Activated T-helper 2 cell treated with anti-CD3 and anti-CD28 coated beads, Interferon-gamma antibody, Interleukin-2, Interleukin-4, amounts not matched to agents 10 μg/mL and 5 μg/mL and 100 μg/mL, durations not matched to agents 14 hours and 24 hours and 36 hours (primary cell): ENCODE measurements at regions of chr17 and their contacts with region 1.

Region 1: DNA sequence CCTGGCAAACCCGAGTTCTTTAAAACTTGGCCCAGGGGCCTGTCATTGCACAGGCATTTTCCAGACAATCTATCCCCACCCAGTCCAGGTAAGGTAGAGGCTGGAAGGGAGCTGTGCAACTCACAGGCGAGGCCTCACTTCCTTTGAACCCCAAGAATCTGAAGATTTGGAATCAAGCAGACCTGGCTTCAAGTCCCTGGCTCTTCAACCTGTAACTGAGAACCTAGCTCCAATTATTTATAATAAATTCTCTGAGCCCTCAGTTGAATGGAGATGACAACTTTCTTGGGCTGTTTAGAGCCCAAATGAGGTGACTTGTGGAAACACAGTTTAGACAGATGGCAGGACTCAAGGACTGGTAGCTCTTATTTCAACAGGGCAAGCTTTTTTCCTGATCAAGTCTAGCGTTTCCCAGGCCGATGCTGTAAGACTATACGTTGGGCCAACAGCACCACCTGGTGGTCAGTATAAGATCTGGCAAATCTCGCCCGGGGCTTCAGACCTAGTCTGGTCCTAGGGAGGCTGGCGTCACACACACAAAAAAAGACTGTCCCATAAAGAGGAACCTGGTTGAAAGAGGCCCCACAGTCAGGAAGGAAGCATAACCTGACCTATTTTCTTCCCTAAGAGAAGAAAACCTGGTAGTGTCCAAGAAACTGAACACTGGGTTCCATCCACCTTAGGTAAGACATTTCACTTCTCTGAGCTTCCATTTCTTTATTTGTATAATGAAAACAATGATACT is 117.9 kb downstream of the C17orf67 start:
- DNase-seq: peak; percentile 54
- H3K4me3 Mint-ChIP-seq: no peak overlapping the region
- H3K27ac Mint-ChIP-seq: no peak overlapping the region
- H3K4me1 Mint-ChIP-seq: peaks cover 4% of the 10 kb centered on the region
- H3K27me3 Mint-ChIP-seq: peaks cover 14% of the 10 kb centered on the region

Region 2: DNA sequence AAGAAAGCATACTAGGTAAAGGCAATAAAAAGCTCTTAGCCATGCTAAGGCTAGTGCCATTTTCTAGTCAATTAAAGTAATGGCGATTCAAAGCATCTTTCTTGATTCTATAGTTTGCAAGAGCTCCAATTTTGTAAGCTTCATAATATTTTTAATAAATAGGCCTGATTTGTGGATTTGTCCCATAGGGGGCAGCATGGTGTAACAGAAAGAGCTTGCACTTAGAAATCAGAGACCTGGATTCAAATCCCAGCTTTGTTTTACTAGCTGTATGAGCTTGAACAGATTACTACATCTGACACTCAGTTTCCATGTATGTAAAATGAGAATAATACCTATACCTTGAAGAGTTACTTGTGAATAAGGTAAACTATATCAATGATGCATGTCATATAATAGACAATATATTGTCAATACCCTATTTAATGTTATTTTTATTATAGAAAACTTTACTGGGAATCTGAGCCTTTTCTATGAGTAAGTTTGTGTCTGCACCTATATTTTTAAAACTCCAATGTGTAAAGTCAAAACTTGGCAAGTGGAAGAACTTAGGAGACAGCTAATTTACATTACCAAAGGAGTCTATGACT is 215.9 kb before region 1 on chr17:
- intact Hi-C with region 1: loop called (anchors 10 kb)
- DNase-seq: no peak
- H3K4me3 Mint-ChIP-seq: no peak overlapping the region
- H3K27ac Mint-ChIP-seq: no peak overlapping the region
- H3K4me1 Mint-ChIP-seq: no peaks in the 10 kb centered on the region
- H3K27me3 Mint-ChIP-seq: peaks cover 8% of the 10 kb centered on the region

Region 3: GRCh38 chr17:56661916-56662315 is 53.9 kb before region 1 on chr17:
- intact Hi-C with region 1: no loop called
- DNase-seq: no peak
- H3K4me3 Mint-ChIP-seq: no peak overlapping the region
- H3K27ac Mint-ChIP-seq: no peak overlapping the region
- H3K4me1 Mint-ChIP-seq: no peaks in the 10 kb centered on the region
- H3K27me3 Mint-ChIP-seq: peaks cover 19% of the 10 kb centered on the region

Region 4: DNA sequence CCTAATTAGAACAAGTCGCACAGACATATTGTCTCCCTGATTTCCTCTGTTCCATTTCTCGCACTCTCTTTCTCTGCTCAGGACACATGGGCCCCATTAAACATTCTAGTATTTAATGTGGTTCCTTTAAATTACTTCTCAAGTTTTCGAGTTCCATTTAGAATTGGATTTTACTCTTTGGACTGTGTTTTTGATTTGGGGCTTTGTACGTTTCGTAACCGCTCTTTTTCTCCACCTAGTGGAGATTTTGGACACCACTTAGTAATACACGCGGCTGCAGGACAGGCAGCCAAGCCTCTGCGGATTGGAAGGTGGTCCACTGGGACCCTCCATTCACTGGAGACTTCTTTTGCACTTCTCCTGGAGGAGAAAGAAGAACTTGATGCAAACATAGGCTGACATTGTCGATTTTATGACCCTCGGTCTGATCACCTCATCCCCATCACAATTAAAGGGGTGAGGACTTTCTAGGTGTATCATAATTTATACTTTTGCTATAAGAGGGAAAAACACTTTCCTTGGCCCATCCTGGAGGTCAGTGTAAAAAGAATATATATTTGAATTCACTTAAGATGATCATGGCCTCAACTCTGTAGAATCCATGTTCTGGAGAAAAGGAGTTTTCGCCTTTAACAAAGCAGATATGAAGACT is 36.5 kb before region 1 on chr17:
- intact Hi-C with region 1: loop called (anchors 5 kb)
- DNase-seq: no peak
- H3K4me3 Mint-ChIP-seq: no peak overlapping the region
- H3K27ac Mint-ChIP-seq: no peak overlapping the region
- H3K4me1 Mint-ChIP-seq: peaks cover 17% of the 10 kb centered on the region
- H3K27me3 Mint-ChIP-seq: peaks cover 45% of the 10 kb centered on the region

Region 5: DNA sequence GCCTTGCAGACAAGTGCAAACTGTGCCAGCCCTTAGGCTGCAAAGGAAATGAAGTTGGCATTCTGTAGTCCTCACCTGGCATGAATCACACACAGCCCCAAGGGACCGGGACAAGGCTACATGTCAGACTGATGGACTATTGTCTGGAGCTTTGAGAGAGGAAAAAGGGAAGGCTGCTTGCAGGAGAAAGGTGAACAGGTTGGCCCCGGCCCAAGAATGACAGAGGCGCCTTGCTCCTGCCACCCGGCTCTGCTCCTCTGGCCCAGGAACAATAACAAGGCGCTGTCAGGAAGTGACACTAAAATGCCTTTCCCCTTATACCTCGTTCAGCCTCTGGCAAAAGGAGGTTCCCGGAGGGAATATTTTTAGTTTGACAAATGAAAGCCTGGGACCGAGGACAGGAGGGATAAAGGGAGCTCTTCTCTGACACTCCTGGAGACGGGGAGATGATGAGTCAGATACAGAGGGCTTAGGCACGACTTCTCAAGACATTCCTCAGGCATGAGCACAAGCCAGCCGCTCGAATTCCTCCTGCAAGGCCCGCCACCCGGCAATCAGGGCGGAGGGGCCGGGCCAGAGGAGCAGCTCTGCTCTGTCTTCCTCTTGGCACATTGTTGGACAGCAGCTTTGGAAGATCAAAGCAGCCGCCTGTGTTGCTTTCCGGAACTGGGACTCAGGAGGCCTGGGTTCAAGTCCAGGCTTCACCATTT is 16.4 kb before region 1 on chr17:
- intact Hi-C with region 1: no loop called
- DNase-seq: no peak
- H3K4me3 Mint-ChIP-seq: no peak overlapping the region
- H3K27ac Mint-ChIP-seq: no peak overlapping the region
- H3K4me1 Mint-ChIP-seq: no peaks in the 10 kb centered on the region
- H3K27me3 Mint-ChIP-seq: peaks cover 29% of the 10 kb centered on the region